Activated CD4-positive, alpha-beta memory T cell treated with anti-CD3 and anti-CD28 coated beads, Interleukin-2, amount 10 ng/mL, durations not matched to agents 7 days and 5 days (primary cell): ENCODE measurements at regions of chr5 and their contacts with region 1.

Region 1: GRCh38 chr5:43120720-43121564 is at the start of gene ZNF131:
- DNase-seq: peak; percentile 97
- H3K4me3 Mint-ChIP-seq: peak within 1 kb of the TSS; percentile 94
- H3K27ac Mint-ChIP-seq: peak within 1 kb of the TSS; percentile 93
- H3K4me1 Mint-ChIP-seq: peaks cover 39% of the 10 kb centered on the region
- H3K27me3 Mint-ChIP-seq: peaks cover 3% of the 10 kb centered on the region
- total RNA-seq, gene ZNF131: 42.5 to 44.7 TPM

Region 2: DNA sequence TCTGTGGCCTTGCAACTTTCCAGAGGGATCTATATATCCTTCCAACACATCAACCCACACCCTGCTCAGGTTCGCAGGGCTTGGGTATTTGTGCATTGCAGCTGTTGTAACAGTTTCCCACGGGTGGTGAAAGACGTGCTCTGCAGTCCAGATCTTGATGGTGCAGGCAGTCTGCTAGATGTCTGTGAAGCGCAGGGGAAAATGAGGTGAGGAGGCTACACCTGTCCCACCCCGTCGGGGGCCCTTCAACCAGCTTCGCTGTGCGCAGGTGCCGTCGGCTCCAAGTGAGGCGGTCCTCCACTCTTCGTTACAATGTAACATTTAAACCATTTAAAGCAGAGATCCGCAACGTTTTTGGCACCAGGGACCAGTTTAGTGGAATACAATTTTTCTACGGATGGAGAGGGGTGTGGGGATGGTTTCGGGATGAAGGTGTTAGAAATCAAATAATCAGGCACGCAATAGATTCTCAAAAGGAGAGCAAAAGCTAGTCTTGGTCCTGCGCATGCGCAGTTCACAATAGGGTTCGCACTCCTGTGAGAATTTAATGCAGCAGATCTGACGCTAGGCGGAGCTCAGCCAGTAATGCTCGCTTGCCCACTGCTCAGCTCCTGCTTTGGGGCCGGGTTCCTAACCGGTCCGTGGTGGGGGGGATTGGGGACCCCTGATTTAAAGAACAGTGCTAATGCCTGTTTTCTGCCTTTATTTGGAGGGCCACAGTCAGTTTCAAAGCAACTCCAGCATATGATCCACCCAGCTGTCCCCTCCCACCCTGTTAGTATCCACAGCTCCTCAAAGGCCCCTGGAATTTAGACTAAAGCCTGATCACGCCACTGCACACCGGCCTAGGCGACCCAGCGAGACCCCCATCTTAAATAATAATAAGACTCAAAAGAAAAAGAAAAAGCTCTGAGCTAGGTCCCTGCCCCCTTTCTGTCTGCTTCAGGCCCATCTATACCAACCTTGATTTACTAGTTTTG is 212.1 kb before region 1 on chr5:
- CTCF ChIA-PET with region 1: interaction called, 8 read pairs
- POLR2A ChIA-PET with region 1: interaction called, 10 read pairs
- DNase-seq: peak; percentile 91
- H3K4me3 Mint-ChIP-seq: peak overlapping the region; percentile 86
- H3K27ac Mint-ChIP-seq: peak overlapping the region; percentile 51
- H3K4me1 Mint-ChIP-seq: peaks cover 16% of the 10 kb centered on the region
- H3K27me3 Mint-ChIP-seq: peaks cover 33% of the 10 kb centered on the region

Region 3: DNA sequence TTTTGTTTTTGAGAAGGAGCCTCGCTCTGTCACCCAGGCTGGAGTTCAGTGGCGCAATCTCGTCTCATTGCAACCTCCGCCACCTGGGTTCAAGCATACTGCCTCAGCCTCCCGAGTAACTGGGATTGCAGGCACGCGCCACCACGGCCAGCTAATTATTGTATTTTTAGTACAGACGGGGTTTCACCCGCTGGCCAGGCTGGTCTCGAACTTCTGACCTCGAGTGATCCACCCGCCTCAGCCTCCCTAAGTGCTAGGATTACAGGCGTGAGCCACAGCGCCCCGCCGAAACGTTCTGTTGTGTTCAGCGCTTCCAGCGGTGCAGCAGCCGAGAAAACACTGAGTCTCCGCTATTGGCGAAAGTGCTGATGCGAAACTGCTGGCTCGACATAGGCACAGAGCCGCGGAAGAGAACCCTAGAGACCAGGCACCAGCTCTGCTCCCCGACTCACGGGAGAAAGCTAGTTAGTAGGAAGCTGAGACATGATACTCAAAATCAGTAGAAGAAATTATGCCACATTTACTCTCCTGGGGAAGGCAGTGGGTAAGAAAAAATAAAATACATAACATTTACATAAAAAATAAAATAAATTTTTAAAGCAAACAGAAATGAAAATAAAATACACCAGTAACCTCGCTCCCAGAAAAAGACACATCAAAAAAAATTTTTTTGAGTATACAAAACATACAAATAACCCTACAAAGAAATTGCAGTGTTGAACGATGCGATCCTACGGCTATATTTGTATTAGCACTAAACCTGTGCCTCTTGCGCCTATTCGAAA is 112.4 kb before region 1 on chr5:
- CTCF ChIA-PET with region 1: interaction called, 4 read pairs
- POLR2A ChIA-PET with region 1: interaction called, 35 read pairs
- DNase-seq: peak; percentile 93
- H3K4me3 Mint-ChIP-seq: peak overlapping the region; percentile 89
- H3K27ac Mint-ChIP-seq: peak overlapping the region; percentile 97
- H3K4me1 Mint-ChIP-seq: peaks cover 39% of the 10 kb centered on the region
- H3K27me3 Mint-ChIP-seq: peaks cover 5% of the 10 kb centered on the region

Region 4: DNA sequence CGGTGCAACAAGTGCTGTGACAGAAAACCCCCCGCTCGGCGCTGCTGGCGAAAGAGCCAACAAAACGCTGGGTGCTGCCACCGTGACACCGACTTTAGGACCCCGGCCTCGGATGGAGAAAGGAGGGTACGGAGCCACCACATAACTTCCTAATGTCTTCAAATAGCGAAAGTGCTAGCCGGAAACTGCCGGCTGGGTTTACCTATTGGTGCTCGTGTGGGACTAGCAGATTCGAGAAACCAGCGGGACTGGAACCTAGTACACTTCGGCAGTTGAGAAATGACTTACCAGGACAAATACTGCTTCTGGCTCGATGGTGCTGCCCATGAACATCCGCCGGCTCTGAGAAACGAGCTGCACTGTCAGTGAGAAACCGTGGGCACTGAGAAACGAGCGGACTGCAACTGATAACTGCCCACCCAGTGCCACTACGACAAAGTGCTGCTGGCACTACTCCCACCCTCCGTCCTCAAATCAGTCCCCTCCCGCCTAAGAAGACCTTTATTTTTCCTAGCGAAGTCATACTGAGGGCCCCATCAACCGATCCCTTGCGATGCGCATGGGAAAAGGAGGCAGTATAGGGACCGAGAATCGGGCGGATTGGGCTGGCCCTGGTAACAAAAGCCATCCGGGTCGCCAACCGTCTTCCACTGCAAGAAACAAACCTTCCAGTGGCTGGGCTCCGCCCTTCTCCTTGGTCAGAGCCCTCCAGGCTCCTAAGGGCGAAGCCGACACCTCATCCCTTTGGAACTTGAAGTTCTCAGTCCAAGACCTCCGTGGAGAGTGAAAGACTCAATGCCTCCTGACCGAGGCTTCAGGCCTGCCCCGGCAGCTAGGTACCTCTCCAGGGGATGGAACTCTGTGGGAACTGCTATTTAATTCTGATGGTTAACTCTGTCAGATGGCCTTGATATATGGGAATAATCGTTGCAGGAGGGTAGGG is 53.9 kb before region 1 on chr5:
- CTCF ChIA-PET with region 1: interaction called, 14 read pairs
- POLR2A ChIA-PET with region 1: interaction called, 104 read pairs
- DNase-seq: peak; percentile 90
- H3K4me3 Mint-ChIP-seq: peak overlapping the region; percentile 97
- H3K27ac Mint-ChIP-seq: peak overlapping the region; percentile 100
- H3K4me1 Mint-ChIP-seq: peaks cover 47% of the 10 kb centered on the region
- H3K27me3 Mint-ChIP-seq: no peaks in the 10 kb centered on the region

Region 5: GRCh38 chr5:43193181-43193893 is 72.4 kb after region 1 on chr5:
- CTCF ChIA-PET with region 1: no interaction called
- POLR2A ChIA-PET with region 1: interaction called, 16 read pairs
- DNase-seq: no peak
- H3K4me3 Mint-ChIP-seq: peak overlapping the region; percentile 78
- H3K27ac Mint-ChIP-seq: peak overlapping the region; percentile 28
- H3K4me1 Mint-ChIP-seq: peaks cover 30% of the 10 kb centered on the region
- H3K27me3 Mint-ChIP-seq: peaks cover 19% of the 10 kb centered on the region

Region 6: GRCh38 chr5:43207601-43208000 is 86.7 kb after region 1 on chr5:
- CTCF ChIA-PET with region 1: no interaction called
- POLR2A ChIA-PET with region 1: no interaction called
- DNase-seq: no peak
- H3K4me3 Mint-ChIP-seq: no peak overlapping the region
- H3K27ac Mint-ChIP-seq: no peak overlapping the region
- H3K4me1 Mint-ChIP-seq: no peaks in the 10 kb centered on the region
- H3K27me3 Mint-ChIP-seq: peaks cover 31% of the 10 kb centered on the region

Region 7: GRCh38 chr5:43602461-43603343 is 481.8 kb after region 1 on chr5 and contains the start of gene NNT:
- CTCF ChIA-PET with region 1: interaction called, 3 read pairs
- POLR2A ChIA-PET with region 1: interaction called, 18 read pairs
- DNase-seq: peak; percentile 84
- H3K4me3 Mint-ChIP-seq: peak within 1 kb of the TSS; percentile 91
- H3K27ac Mint-ChIP-seq: peak within 1 kb of the TSS; percentile 84
- H3K4me1 Mint-ChIP-seq: peaks cover 41% of the 10 kb centered on the region
- H3K27me3 Mint-ChIP-seq: no peaks in the 10 kb centered on the region
- total RNA-seq, gene NNT: 96.4 to 110 TPM